ENCODE measurements at regions of chr19 and their contacts with region 1.

Region 1: GRCh38 chr19:13195678-13196077 is 45.5 kb downstream of the IER2 start:
- DNase-seq: peak; percentile 47 to 86
- H3K4me3 ChIP-seq: no peak overlapping the region
- H3K27ac ChIP-seq: no peak overlapping the region
- H3K4me1 ChIP-seq: no peaks in the 10 kb centered on the region; a peak in 2 of 7 replicates
- H3K27me3 ChIP-seq: no peaks in the 10 kb centered on the region
- CTCF ChIP-seq: peak; percentile 94 to 99 (median 97)
- EP300 ChIP-seq: no peak
- POLR2A ChIP-seq: no peak
- RAD21 ChIP-seq: peak; percentile 92 to 93

Region 2: DNA sequence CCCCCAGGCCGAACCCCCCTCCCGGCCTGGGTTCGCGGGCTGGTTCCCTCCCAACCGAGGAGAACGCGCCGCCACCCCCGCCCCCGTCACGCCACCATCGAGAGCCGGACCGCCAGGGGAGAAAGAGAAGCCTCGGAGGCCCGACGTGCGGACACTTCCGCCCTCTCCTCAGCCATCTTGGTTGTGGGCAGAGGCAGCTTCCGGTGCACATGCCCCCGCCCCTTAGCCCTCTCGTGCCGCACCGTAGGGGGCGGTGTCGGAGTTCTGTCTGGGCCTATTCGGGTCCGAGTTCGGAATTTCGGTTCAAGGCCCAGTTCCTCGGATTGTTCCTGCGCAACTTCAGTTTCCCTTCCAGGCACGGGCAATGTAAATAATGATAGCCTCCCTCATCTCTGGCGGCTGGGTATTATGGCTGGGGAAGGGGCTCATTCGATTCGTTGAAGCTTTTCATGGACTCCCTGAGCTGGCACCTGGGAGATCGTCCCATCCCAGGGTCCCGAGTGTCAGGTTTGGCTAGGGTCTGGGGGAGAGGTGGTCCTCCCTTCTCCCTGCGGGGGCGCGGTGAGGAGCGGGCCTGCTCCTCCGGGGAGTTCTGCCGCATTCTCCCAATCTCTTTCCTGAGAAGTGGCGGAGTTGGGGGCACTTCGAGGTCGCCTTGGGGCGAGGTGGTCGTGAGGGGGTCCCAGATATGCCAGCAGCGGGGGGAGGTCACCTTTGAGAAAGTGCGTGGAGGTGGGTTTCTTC is 45.3 kb before region 1 on chr19 and contains the starts of genes IER2 and STX10:
- CTCF ChIA-PET with region 1: interaction called, 9 read pairs
- POLR2A ChIA-PET with region 1: interaction called, 16 read pairs
- DNase-seq: peak in 1 of 2 experiments; percentile 91
- H3K4me3 ChIP-seq: peak within 1 kb of the TSS; percentile 87 to 97 (median 94)
- H3K27ac ChIP-seq: peak within 1 kb of the TSS; percentile 79
- H3K4me1 ChIP-seq: peaks cover 0 to 6% (median 3%) of the 10 kb centered on the region in 4 experiments; a peak in 3 of 7 replicates
- H3K27me3 ChIP-seq: no peaks in the 10 kb centered on the region; a peak in 1 of 7 replicates
- CTCF ChIP-seq: peak in 1 of 3 experiments; percentile 33; a peak in 2 of 4 replicates
- EP300 ChIP-seq: peak in 1 of 2 experiments; percentile 43; a peak in 1 of 3 replicates
- POLR2A ChIP-seq: no peak; a peak in 1 of 3 replicates
- RAD21 ChIP-seq: peak; percentile 12 to 18; a peak in 2 of 4 replicates
- total RNA-seq, gene IER2: 137 and 138 TPM in 2 replicates
- total RNA-seq, gene STX10: 50.8 and 53.0 TPM in 2 replicates

Region 3: DNA sequence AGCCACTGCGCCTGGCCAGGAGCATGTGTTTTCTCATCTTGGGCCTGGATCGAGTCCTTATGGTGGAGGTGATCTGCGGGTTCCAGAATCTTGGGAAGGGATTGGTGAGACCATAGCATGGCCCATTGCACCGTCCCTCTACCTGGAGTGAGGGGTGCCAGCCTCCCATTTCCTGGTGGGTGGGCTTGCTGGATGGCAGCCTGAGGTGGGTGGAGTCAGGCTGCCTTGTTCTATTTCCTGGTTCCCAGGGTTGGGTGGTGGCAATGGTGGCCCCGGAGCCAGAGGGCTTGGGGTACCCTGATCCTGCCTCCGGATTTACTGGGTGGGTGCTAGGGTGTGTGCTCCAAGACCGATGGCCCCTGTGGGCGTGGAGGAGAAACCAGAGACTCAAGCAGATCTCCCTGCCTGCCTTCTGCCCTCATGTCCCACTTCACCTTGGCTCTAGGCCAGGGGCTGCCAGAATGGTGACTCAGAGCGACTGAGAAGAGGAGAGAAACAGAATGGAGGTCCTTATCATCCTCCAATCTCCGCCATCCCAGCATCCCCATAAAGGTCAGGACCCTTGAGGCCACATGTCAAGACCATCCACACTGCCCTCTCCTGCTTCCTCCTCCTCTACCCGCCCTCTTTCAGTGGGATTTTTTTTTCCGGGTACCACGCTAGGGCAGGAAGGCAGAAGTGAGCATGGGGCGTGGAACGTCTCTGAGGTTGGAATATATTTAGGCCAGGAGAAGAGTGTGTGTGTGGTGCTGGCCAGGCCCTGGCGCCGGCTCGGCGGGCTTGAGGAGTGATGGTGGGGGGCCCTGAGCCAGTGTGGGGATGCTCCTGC is 23.4 kb before region 1 on chr19:
- CTCF ChIA-PET with region 1: interaction called, 41 read pairs
- POLR2A ChIA-PET with region 1: interaction called, 5 read pairs
- DNase-seq: no peak
- H3K4me3 ChIP-seq: no peak overlapping the region
- H3K27ac ChIP-seq: no peak overlapping the region
- H3K4me1 ChIP-seq: peaks cover under 1 to 5% (median 4%) of the 10 kb centered on the region in 4 experiments; a peak in 5 of 7 replicates
- H3K27me3 ChIP-seq: no peaks in the 10 kb centered on the region
- CTCF ChIP-seq: no peak
- EP300 ChIP-seq: no peak
- POLR2A ChIP-seq: no peak
- RAD21 ChIP-seq: no peak

Region 4: DNA sequence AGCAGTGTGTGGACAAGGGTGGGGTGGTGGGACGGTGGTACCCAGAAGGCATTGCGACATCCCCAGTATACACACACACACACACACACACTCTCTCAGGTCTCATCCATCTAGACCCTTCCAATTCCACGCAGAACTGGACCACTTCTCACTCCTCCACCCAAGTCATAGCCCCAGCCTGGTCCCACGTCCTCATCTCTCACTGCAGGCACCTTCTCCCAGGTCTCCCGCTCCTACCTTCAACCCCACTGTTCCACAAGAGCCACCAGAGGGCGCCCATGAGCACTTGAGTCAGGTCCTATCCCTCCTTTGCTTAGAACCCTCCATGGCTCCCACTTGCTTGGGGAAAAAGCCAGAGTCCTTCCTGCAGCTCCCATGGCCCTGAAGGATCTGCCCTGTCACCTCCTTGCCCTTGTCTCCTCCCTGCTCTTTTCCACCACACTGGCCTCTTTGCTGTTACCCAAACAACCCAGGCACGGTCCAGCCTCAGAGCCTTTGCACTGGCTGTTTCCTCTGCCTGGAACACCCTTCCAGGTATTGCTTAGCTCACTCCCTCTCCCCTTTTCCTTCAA is 17.2 kb after region 1 on chr19:
- CTCF ChIA-PET with region 1: interaction called, 89 read pairs
- POLR2A ChIA-PET with region 1: interaction called, 3 read pairs
- DNase-seq: peak in 1 of 2 experiments; percentile 86
- H3K4me3 ChIP-seq: no peak overlapping the region
- H3K27ac ChIP-seq: no peak overlapping the region
- H3K4me1 ChIP-seq: peaks cover 0 to 10% (median 3%) of the 10 kb centered on the region in 4 experiments; a peak in 3 of 7 replicates
- H3K27me3 ChIP-seq: no peaks in the 10 kb centered on the region
- CTCF ChIP-seq: peak; percentile 69 to 88 (median 80)
- EP300 ChIP-seq: no peak
- POLR2A ChIP-seq: no peak
- RAD21 ChIP-seq: peak; percentile 50 to 61

Region 5: GRCh38 chr19:13241231-13242104 is 45.8 kb after region 1 on chr19:
- CTCF ChIA-PET with region 1: interaction called, 16 read pairs
- POLR2A ChIA-PET with region 1: no interaction called
- DNase-seq: peak in 1 of 2 experiments; percentile 70
- H3K4me3 ChIP-seq: no peak overlapping the region
- H3K27ac ChIP-seq: no peak overlapping the region
- H3K4me1 ChIP-seq: peaks cover 0 to 7% (median 3%) of the 10 kb centered on the region in 4 experiments; a peak in 4 of 7 replicates
- H3K27me3 ChIP-seq: no peaks in the 10 kb centered on the region
- CTCF ChIP-seq: peak; percentile 53 to 86 (median 74)
- EP300 ChIP-seq: no peak
- POLR2A ChIP-seq: no peak
- RAD21 ChIP-seq: peak in 1 of 2 experiments; percentile 35; a peak in 2 of 4 replicates

Region 6: GRCh38 chr19:13277104-13277809 is 81.6 kb after region 1 on chr19:
- CTCF ChIA-PET with region 1: interaction called, 15 read pairs
- POLR2A ChIA-PET with region 1: no interaction called
- DNase-seq: peak in 1 of 2 experiments; percentile 72
- H3K4me3 ChIP-seq: no peak overlapping the region
- H3K27ac ChIP-seq: no peak overlapping the region
- H3K4me1 ChIP-seq: peaks cover 0 to 4% (median 1%) of the 10 kb centered on the region in 4 experiments; a peak in 3 of 7 replicates
- H3K27me3 ChIP-seq: no peaks in the 10 kb centered on the region
- CTCF ChIP-seq: peak; percentile 3 to 77 (median 67)
- EP300 ChIP-seq: no peak
- POLR2A ChIP-seq: no peak
- RAD21 ChIP-seq: peak; percentile 83 to 87